SK-N-SH (cell line): ENCODE measurements at regions of chr17 and their contacts with region 1.

Region 1: DNA sequence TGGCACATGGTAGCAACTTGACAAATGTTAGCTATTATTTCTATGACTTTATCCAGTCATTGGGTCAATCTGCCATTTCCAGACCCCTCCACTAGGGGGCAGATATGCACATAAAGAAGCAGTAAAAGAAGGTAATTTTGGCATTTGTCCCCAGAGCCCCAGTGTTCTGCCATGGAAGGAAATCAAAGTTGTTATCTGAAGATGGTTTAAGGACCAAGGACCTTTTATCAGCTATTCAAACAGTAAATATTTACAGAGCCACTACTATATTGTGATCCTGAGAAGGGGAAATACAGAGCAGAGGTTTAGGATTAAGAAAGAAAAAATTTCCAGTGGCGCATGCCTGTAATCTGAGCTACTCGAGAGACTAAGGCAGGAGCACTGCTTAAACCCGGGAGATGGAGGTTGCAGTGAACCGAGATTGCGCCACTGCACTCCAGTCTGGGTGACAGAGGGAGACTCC is 20.0 kb downstream of the TRAF4 start:
- DNase-seq: peak; percentile 78
- H3K4me3 ChIP-seq: no peak overlapping the region
- H3K27ac ChIP-seq: peak overlapping the region in 1 of 2 experiments; percentile 0; a peak in 1 of 4 replicates
- H3K4me1 ChIP-seq: peaks cover 0 to 19% of the 10 kb centered on the region in 2 experiments; a peak in 1 of 4 replicates
- H3K27me3 ChIP-seq: no peaks in the 10 kb centered on the region
- CTCF ChIP-seq: peak; percentile 96
- EP300 ChIP-seq: no peak
- RAD21 ChIP-seq: peak; percentile 81

Region 2: GRCh38 chr17:28612936-28613872 is 150.6 kb before region 1 on chr17:
- CTCF ChIA-PET with region 1: no interaction called
- POLR2A ChIA-PET with region 1: no interaction called
- DNase-seq: peak; percentile 70
- H3K4me3 ChIP-seq: no peak overlapping the region
- H3K27ac ChIP-seq: no peak overlapping the region
- H3K4me1 ChIP-seq: no peaks in the 10 kb centered on the region
- H3K27me3 ChIP-seq: no peaks in the 10 kb centered on the region
- CTCF ChIP-seq: peak; percentile 72
- EP300 ChIP-seq: no peak
- RAD21 ChIP-seq: peak; percentile 75

Region 3: GRCh38 chr17:28701987-28702751 is 61.7 kb before region 1 on chr17:
- CTCF ChIA-PET with region 1: no interaction called
- POLR2A ChIA-PET with region 1: no interaction called
- DNase-seq: no peak
- H3K4me3 ChIP-seq: no peak overlapping the region
- H3K27ac ChIP-seq: no peak overlapping the region
- H3K4me1 ChIP-seq: peaks cover 0 to 14% of the 10 kb centered on the region in 2 experiments; a peak in 1 of 4 replicates
- H3K27me3 ChIP-seq: no peaks in the 10 kb centered on the region
- CTCF ChIP-seq: no peak
- EP300 ChIP-seq: no peak
- RAD21 ChIP-seq: no peak

Region 4: GRCh38 chr17:28726226-28727130 is 37.4 kb before region 1 on chr17 and contains the start of gene TLCD1:
- CTCF ChIA-PET with region 1: interaction called, 84 read pairs
- POLR2A ChIA-PET with region 1: no interaction called
- DNase-seq: peak; percentile 92
- H3K4me3 ChIP-seq: peak within 1 kb of the TSS; percentile 62 to 81
- H3K27ac ChIP-seq: peak within 1 kb of the TSS; percentile 88 to 97
- H3K4me1 ChIP-seq: peaks cover 16 to 41% of the 10 kb centered on the region in 2 experiments
- H3K27me3 ChIP-seq: no peaks in the 10 kb centered on the region
- CTCF ChIP-seq: peak; percentile 98
- EP300 ChIP-seq: no peak; a peak in 1 of 4 replicates
- RAD21 ChIP-seq: peak; percentile 98
- polyA plus RNA-seq, gene TLCD1: 18.3 and 21.6 TPM in 2 replicates

Region 5: DNA sequence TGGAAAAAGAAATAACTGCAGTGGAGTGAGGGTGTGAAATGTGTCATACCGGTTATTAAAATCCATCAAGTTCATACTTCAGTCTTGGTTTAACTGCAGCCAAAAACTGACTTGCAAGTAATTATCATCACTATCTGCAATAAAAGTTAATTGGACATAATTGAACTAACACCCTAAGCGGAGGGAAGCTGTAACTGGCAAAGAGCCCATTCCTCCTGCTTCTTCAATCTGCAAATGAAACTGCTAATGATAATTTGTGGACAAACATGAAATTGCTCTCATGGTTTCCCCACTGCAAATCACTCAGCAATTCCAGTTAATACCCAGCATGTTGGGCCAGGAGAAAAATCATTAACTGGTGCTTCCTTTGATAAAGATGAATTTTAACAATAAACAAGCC is 32.2 kb after region 1 on chr17:
- CTCF ChIA-PET with region 1: interaction called, 15 read pairs
- POLR2A ChIA-PET with region 1: no interaction called
- DNase-seq: no peak
- H3K4me3 ChIP-seq: no peak overlapping the region
- H3K27ac ChIP-seq: no peak overlapping the region
- H3K4me1 ChIP-seq: no peaks in the 10 kb centered on the region
- H3K27me3 ChIP-seq: no peaks in the 10 kb centered on the region
- CTCF ChIP-seq: no peak
- EP300 ChIP-seq: no peak
- RAD21 ChIP-seq: no peak

Region 6: DNA sequence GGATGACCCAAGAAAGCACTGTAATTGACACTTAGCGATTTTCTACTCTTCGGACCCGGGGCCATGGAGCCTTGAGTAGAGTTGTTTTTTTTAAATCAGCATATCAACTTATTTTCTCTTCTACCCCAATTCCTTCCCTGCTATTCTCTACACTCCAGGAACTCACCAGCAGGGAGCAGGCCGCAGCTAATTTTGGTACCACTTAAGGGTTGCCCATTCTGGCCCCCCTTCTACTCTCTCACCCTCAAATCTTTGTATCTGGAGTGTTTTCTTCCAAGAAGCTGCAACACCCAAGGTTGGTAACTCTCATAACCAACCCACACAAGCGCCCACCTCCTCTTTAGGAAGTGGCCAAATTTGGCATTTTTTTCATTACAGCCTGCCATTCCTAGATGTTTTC is 85.4 kb after region 1 on chr17:
- CTCF ChIA-PET with region 1: interaction called, 27 read pairs
- POLR2A ChIA-PET with region 1: no interaction called
- DNase-seq: peak; percentile 25
- H3K4me3 ChIP-seq: no peak overlapping the region
- H3K27ac ChIP-seq: no peak overlapping the region
- H3K4me1 ChIP-seq: no peaks in the 10 kb centered on the region; a peak in 1 of 4 replicates
- H3K27me3 ChIP-seq: no peaks in the 10 kb centered on the region
- CTCF ChIP-seq: peak; percentile 19; the same call in 1 of the 2 replicates
- EP300 ChIP-seq: no peak
- RAD21 ChIP-seq: no peak

Region 7: DNA sequence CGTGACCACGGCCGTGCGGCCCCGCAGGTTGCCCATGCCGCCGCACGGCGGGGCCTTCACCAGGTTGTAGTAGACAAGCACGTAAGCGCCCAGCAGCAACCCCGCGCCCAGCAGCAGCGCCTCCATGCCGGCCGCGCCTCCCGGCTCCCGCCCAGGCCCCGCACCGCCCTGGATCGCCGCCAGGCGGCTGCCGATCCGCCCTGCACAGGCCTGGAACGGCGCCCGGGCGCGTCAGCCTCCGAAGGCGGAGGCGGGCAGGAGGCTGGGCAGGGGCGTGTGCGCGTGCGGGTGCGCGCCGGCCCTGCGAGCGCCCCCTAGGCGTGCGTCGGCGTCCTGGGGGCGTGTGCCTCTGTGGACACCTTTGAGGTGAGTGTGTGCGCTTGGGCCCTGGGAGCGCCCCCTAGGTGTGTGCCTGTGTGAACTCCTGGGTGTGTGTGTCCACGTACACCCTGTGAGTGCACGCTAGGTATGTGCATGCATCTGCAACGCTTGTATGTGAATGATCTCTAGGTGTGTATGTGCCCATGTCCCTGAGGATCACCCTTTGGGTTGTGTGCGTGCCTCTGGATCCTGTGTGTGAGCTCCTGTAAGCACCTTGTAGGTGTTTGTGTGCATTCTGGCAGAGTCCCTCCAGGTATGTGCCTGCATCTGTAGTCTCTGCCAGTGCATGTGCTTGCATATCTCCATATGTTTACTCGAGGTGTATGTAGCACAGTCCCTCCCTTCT is 139.1 kb after region 1 on chr17 and contains the start of gene DHRS13:
- CTCF ChIA-PET with region 1: interaction called, 95 read pairs
- POLR2A ChIA-PET with region 1: interaction called, 4 read pairs
- DNase-seq: peak; percentile 99
- H3K4me3 ChIP-seq: peak within 1 kb of the TSS; percentile 71 to 75
- H3K27ac ChIP-seq: peak within 1 kb of the TSS; percentile 53 to 79
- H3K4me1 ChIP-seq: peaks cover 3 to 15% of the 10 kb centered on the region in 2 experiments; a peak in 2 of 4 replicates
- H3K27me3 ChIP-seq: no peaks in the 10 kb centered on the region
- CTCF ChIP-seq: peak; percentile 87
- EP300 ChIP-seq: no peak; a peak in 1 of 4 replicates
- RAD21 ChIP-seq: peak; percentile 55
- polyA plus RNA-seq, gene DHRS13: 7.4 and 7.6 TPM in 2 replicates

Region 8: GRCh38 chr17:28951991-28952975 is 188.4 kb after region 1 on chr17:
- CTCF ChIA-PET with region 1: interaction called, 18 read pairs
- POLR2A ChIA-PET with region 1: no interaction called
- DNase-seq: peak; percentile 88
- H3K4me3 ChIP-seq: peak overlapping the region; percentile 80 to 81
- H3K27ac ChIP-seq: peak overlapping the region; percentile 99 to 100
- H3K4me1 ChIP-seq: peaks cover 14 to 24% of the 10 kb centered on the region in 2 experiments
- H3K27me3 ChIP-seq: no peaks in the 10 kb centered on the region
- CTCF ChIP-seq: no peak
- EP300 ChIP-seq: no peak
- RAD21 ChIP-seq: no peak